Activated T-helper 1 cell treated with anti-CD3 and anti-CD28 coated beads, Interleukin-12 subunit alpha, Interleukin-12 subunit beta, Interleukin-2, Interleukin-4 antibody, amounts not matched to agents 30 ng/mL and 10 ng/mL and 1 ng/mL, durations not matched to agents 14 hours and 24 hours and 36 hours (primary cell): ENCODE measurements at regions of chr3 and their contacts with region 1.

Region 1: DNA sequence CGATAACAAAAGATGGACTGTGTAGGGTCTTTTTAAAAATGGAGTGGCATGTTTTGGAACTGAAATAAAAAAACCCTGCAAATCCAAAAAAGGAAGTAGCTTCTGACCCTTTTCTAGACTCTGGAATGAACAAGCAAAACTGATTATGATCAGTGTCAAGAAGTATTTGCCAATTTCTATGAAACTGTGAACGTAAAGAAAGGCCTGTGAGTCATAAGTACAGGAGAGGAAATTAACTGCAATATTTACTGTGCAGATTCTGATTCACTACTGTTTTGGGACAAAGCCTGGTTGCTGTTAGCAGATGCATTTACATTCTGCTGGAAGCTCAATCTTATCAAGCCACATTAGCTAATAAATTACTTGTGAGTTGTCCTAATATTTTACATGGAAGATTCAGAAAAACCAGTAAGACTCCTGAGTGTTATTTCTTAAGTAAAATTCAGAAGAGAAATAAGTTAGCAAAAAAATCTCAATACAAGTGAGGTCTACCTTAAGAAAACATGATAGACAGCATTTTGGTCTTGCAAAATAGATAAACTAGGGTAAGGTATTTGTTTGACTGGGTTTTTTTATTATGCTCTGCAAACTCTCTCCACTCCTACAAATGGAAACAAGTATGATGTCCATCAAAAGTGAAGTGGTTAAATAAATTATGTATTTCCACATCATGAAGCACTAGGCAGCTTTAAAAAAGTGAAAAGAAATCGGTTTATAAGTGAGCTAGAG is 90.2 kb upstream of the LMOD3 start:
- DNase-seq: no peak
- H3K4me3 Mint-ChIP-seq: peak overlapping the region; percentile 43
- H3K27ac Mint-ChIP-seq: peak overlapping the region; percentile 92
- H3K4me1 Mint-ChIP-seq: peaks cover 57% of the 10 kb centered on the region
- H3K27me3 Mint-ChIP-seq: no peaks in the 10 kb centered on the region

Region 2: GRCh38 chr3:69137011-69137410 is 75.6 kb before region 1 on chr3:
- intact Hi-C with region 1: no loop called
- DNase-seq: no peak
- H3K4me3 Mint-ChIP-seq: no peak overlapping the region
- H3K27ac Mint-ChIP-seq: no peak overlapping the region
- H3K4me1 Mint-ChIP-seq: no peaks in the 10 kb centered on the region
- H3K27me3 Mint-ChIP-seq: peaks cover 32% of the 10 kb centered on the region

Region 3: DNA sequence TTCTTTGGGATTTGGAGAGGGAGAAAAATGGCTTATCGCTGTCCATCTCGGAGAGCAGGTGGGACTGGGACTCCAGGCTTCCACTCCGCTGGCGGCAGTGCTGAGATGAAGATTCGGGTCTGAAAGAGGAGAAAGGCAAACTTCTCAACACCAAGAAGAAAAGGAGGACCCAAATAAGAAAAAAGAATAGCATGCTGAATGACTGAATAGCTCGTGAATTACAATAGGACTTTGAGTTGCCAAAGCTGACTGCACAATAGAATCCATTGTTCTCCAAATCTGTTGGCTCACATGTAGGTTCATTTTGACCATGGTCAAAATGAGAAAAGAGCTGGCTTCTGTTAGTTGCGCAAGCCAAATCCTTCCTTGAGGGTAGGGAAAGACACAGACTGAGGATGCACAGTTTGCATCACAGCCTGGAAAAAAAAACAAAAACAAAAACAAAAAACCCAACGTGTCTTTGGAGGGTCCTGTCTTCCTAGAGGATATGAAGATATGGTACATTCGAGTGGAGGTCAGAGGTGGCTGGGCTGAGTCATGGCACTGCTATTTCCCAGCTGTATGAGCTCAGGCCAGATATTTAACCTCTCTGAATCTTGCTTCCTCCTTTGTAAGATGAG is 30.9 kb before region 1 on chr3:
- intact Hi-C with region 1: loop called (anchors 5 kb)
- DNase-seq: no peak
- H3K4me3 Mint-ChIP-seq: no peak overlapping the region
- H3K27ac Mint-ChIP-seq: peak overlapping the region; percentile 32
- H3K4me1 Mint-ChIP-seq: peaks cover 42% of the 10 kb centered on the region
- H3K27me3 Mint-ChIP-seq: no peaks in the 10 kb centered on the region

Region 4: GRCh38 chr3:69240651-69241568 is 28.3 kb after region 1 on chr3:
- intact Hi-C with region 1: loop called (anchors 2 kb)
- DNase-seq: no peak
- H3K4me3 Mint-ChIP-seq: no peak overlapping the region
- H3K27ac Mint-ChIP-seq: no peak overlapping the region
- H3K4me1 Mint-ChIP-seq: peaks cover 27% of the 10 kb centered on the region
- H3K27me3 Mint-ChIP-seq: no peaks in the 10 kb centered on the region

Region 5: GRCh38 chr3:69282181-69282580 is 69.6 kb after region 1 on chr3:
- intact Hi-C with region 1: loop called (anchors 1 kb)
- DNase-seq: peak; percentile 12
- H3K4me3 Mint-ChIP-seq: peak overlapping the region; percentile 19
- H3K27ac Mint-ChIP-seq: peak overlapping the region; percentile 84
- H3K4me1 Mint-ChIP-seq: peaks cover 45% of the 10 kb centered on the region
- H3K27me3 Mint-ChIP-seq: no peaks in the 10 kb centered on the region